ENCODE measurements at regions of chr19 and their contacts with region 1.

Region 1: DNA sequence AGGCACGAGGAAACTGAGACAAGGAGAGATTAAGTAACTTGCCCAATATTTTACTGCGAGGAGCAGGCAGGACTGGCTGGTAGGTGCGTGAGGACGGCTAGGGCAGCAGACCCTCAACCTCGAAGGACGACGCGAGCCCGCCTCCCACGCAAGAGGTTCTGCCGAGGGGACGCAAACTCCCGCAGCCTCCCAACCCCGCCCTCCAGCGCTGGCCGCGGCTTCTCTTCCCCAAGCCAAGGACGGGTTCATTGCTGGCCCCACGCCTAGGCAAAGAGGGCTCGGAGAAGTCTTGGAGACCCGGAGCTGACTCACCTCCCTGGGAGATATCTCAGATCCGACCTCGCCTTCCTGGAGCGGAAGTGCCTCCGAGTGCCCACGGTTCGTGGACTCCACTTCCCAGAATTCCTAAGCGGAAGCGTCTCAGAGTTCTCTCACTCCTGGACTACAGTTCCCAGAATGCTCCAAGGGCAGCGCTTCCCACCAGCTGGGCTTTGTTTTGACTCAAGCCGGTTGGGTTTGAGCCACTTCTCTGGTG is at the start of gene ZNF235:
- DNase-seq: peak; percentile 58
- H3K4me3 Mint-ChIP-seq: peak within 1 kb of the TSS; percentile 88
- H3K27ac Mint-ChIP-seq: no peak within 1 kb of the TSS
- H3K4me1 Mint-ChIP-seq: peaks cover 14% of the 10 kb centered on the region
- H3K27me3 Mint-ChIP-seq: no peaks in the 10 kb centered on the region
- total RNA-seq, gene ZNF235: 2.7 and 3.1 TPM in 2 replicates

Region 2: DNA sequence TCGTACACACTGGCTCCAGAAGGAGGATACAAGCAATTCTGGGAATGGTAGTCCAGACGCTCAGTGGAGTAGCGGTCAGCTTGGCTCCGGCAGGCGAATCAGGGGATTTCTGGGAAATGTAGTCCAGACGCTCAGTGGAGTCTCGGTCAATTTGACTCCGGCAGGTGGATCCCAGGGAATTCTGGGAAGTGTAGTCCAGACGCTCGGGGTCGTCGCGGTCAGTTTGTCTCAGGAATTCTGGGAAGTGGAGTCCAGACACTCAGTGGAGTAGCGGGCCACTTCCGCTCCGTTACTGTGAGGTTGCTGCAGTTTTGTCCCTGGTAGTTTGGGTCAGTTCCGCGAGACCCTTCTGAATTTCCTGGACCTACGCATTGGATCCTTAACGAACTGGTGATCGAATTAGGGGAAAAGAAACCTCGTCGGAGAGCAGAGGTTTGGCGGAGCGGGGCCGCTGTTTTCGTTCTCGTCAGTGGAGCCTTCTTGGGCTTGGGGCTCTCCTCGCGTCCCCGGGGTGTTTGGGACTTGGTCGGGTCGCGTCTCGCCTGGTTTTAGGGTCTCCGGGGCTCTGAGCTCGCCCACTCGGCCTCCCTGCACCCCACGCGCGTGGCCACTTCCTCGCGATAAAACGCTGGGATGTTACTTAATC is 191.5 kb before region 1 on chr19 and contains the start of gene ZNF225:
- intact Hi-C with region 1: loop called (anchors 1 kb)
- DNase-seq: peak; percentile 81
- H3K4me3 Mint-ChIP-seq: peak within 1 kb of the TSS; percentile 99
- H3K27ac Mint-ChIP-seq: peak within 1 kb of the TSS; percentile 82
- H3K4me1 Mint-ChIP-seq: peaks cover 14% of the 10 kb centered on the region
- H3K27me3 Mint-ChIP-seq: no peaks in the 10 kb centered on the region
- total RNA-seq, gene ZNF225: 3.5 and 3.6 TPM in 2 replicates

Region 3: DNA sequence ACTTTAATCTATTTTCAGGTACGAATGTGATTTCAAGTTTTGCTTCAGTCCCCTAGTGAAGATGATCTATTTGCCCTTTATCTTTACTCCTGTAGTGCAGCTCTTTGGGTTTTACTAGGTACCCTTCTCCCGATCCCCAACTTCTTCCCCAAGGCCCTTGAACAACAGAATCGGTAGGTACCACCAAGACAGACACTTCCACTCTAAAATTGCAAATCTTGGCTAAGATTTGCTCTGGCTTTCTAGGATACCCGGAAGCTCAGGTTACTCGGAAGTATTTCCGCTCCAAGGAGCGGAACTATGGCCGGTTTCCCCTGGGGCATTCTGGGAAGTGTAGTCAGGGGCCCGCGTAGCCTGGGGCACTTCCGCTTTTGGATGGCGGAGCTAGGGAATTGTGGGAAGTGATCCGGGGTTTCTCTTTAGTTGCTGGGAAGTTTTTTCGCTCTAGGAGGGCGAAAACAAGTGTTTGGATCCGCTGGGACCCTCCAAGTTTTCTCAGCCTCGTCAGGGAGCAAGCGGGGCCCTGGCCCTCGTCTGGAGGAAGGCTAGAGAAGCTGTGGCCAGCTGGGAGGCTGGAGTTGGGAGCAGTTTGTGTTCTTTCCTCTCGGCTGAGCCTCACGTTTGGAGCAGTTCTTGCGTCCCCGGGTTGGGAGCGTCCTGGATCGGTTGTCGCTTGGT is 97.5 kb before region 1 on chr19:
- intact Hi-C with region 1: loop called (anchors 5 kb)
- DNase-seq: peak; percentile 71
- H3K4me3 Mint-ChIP-seq: peak overlapping the region; percentile 85
- H3K27ac Mint-ChIP-seq: peak overlapping the region; percentile 76
- H3K4me1 Mint-ChIP-seq: peaks cover 8% of the 10 kb centered on the region
- H3K27me3 Mint-ChIP-seq: no peaks in the 10 kb centered on the region

Region 4: GRCh38 chr19:44344255-44344654 is 39.5 kb after region 1 on chr19:
- intact Hi-C with region 1: no loop called
- DNase-seq: no peak
- H3K4me3 Mint-ChIP-seq: no peak overlapping the region
- H3K27ac Mint-ChIP-seq: no peak overlapping the region
- H3K4me1 Mint-ChIP-seq: no peaks in the 10 kb centered on the region
- H3K27me3 Mint-ChIP-seq: no peaks in the 10 kb centered on the region

Region 5: GRCh38 chr19:44539236-44539826 is 234.6 kb after region 1 on chr19:
- intact Hi-C with region 1: no loop called
- DNase-seq: no peak
- H3K4me3 Mint-ChIP-seq: no peak overlapping the region
- H3K27ac Mint-ChIP-seq: no peak overlapping the region
- H3K4me1 Mint-ChIP-seq: no peaks in the 10 kb centered on the region
- H3K27me3 Mint-ChIP-seq: no peaks in the 10 kb centered on the region

Measured in activated T-helper 2 cell treated with anti-CD3 and anti-CD28 coated beads, Interferon-gamma antibody, Interleukin-2, Interleukin-4, amounts not matched to agents 10 μg/mL and 5 μg/mL and 100 μg/mL, durations not matched to agents 14 hours and 24 hours and 36 hours (primary cell).